ENCODE measurements at regions of chr20 and their contacts with region 1.

Region 1: DNA sequence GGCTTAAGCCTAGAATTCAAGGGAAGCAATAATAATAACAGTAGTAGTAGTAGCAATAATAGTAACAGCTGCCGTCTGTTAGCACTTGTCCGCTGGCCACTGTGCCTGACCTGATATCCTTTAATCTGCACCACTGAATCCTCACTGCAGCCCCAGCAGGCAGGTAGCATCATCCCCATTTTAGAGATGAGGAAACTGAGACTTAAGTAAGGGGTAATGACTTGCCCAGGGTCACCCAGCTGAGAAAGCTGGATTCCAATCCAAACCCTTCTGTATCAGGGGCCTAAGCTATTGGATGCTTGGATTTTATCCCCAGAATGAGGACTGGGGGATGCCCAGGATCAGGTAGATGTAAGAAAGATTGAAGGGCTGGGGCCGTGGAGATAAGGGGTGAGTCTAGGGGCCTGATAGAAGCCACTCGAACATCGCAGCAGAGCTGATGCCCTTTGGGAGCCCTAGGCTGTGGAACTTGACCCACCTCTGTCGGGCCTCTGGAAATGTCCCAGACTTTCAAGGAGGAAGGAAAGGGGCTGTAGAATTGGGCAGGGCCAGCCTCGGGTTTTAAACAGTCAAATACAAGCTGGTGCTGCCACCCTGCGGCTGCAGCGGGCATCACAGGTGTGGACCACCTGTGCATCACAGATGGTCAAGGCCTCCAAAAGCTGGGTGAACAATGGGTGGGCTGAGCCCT is 102.1 kb upstream of the MYL9 start:
- DNase-seq: peak; percentile 75
- H3K4me3 Mint-ChIP-seq: no peak overlapping the region
- H3K27ac Mint-ChIP-seq: no peak overlapping the region
- H3K4me1 Mint-ChIP-seq: peaks cover 3% of the 10 kb centered on the region
- H3K27me3 Mint-ChIP-seq: peaks cover 55% of the 10 kb centered on the region

Region 2: GRCh38 chr20:36210436-36211020 is 228.7 kb before region 1 on chr20:
- CTCF ChIA-PET with region 1: interaction called, 17 read pairs
- DNase-seq: no peak
- H3K4me3 Mint-ChIP-seq: no peak overlapping the region
- H3K27ac Mint-ChIP-seq: no peak overlapping the region
- H3K4me1 Mint-ChIP-seq: no peaks in the 10 kb centered on the region
- H3K27me3 Mint-ChIP-seq: peaks cover 12% of the 10 kb centered on the region

Region 3: DNA sequence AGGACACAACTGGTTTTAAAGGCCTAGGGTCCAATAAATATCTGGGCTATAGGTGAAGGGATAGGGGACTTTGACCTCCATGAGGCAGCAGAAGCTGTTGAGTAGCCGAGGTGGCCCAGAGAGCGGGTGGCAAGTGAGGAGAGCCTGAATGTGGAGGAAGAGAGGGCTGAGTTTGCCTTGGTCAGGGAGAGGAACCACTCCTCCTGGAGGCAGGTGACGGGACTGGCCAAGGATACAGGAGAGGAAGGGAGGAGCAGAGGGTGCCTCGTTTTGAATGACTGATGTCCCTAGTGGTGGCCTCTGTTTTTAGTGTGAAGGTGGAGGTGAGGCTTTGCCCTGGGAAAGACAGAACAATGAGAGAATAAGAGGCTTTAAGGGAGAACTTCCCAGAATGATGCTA is 222.0 kb before region 1 on chr20:
- CTCF ChIA-PET with region 1: interaction called, 17 read pairs
- DNase-seq: no peak
- H3K4me3 Mint-ChIP-seq: no peak overlapping the region
- H3K27ac Mint-ChIP-seq: no peak overlapping the region
- H3K4me1 Mint-ChIP-seq: no peaks in the 10 kb centered on the region
- H3K27me3 Mint-ChIP-seq: peaks cover 15% of the 10 kb centered on the region

Region 4: DNA sequence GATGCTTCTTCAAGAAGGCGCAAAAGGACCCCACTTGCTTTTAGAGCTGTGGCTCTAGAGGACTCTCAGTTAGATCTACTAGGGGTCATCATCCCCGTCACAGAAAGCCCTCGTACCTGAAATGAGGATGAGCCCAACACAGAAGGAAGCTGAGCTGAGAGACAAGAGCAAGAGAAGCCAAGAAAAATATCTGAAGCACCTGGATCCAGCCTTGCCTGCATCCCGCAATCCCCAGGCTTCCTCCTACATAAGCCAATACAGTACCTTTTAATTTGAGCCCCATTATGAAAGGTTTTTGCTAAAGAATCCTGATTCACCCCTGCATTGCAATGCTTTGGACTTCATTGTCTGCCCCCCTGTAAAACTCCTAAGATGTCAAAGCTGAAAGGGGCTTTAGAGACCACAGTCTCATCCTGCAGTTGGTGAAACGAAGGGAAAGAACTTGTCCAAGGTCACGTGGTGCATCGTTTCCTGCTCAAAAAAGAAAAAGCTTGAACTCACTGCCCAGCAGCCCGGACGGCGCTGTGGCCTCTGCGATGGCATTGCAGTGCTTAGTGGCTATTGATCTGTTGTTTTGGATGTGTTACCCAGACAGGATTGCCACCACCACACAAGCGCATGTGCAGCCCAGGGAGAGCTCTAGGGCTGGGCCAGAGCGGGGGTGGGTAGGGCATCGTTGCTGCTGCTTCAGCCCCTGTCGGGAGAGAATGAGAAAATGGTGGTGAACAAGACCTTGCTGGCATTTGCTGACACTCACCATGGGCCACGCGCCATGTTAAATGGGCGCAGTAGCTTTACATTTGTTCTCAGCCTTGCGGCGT is 174.5 kb before region 1 on chr20:
- CTCF ChIA-PET with region 1: no interaction called
- DNase-seq: no peak
- H3K4me3 Mint-ChIP-seq: no peak overlapping the region
- H3K27ac Mint-ChIP-seq: no peak overlapping the region
- H3K4me1 Mint-ChIP-seq: no peaks in the 10 kb centered on the region
- H3K27me3 Mint-ChIP-seq: peaks cover 4% of the 10 kb centered on the region

Region 5: GRCh38 chr20:36421641-36422040 is 17.5 kb before region 1 on chr20:
- CTCF ChIA-PET with region 1: no interaction called
- DNase-seq: no peak
- H3K4me3 Mint-ChIP-seq: no peak overlapping the region
- H3K27ac Mint-ChIP-seq: no peak overlapping the region
- H3K4me1 Mint-ChIP-seq: no peaks in the 10 kb centered on the region
- H3K27me3 Mint-ChIP-seq: no peaks in the 10 kb centered on the region

Region 6: DNA sequence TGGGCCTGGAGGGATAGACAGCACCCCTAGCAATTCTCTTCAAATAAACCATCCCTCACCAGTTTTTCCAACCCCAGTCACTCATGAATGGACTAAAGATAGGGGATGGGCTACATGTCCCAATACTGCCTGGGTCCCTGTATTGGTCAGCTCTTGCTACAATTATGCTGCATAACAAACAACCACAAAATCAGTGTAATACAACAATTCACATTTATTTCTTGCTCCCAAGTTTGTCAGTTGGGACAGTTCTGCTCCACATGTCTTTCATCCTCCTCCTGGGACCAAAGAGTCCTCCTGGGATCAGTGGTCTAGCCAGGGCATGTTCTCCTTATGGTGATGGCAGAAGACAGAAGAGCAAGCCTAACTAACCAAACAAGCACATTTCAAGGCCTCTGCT is 10.5 kb after region 1 on chr20:
- CTCF ChIA-PET with region 1: interaction called, 11 read pairs
- DNase-seq: no peak
- H3K4me3 Mint-ChIP-seq: no peak overlapping the region
- H3K27ac Mint-ChIP-seq: no peak overlapping the region
- H3K4me1 Mint-ChIP-seq: no peaks in the 10 kb centered on the region
- H3K27me3 Mint-ChIP-seq: peaks cover 14% of the 10 kb centered on the region